ENCODE measurements at regions of chr5 and their contacts with region 1.

Region 1: DNA sequence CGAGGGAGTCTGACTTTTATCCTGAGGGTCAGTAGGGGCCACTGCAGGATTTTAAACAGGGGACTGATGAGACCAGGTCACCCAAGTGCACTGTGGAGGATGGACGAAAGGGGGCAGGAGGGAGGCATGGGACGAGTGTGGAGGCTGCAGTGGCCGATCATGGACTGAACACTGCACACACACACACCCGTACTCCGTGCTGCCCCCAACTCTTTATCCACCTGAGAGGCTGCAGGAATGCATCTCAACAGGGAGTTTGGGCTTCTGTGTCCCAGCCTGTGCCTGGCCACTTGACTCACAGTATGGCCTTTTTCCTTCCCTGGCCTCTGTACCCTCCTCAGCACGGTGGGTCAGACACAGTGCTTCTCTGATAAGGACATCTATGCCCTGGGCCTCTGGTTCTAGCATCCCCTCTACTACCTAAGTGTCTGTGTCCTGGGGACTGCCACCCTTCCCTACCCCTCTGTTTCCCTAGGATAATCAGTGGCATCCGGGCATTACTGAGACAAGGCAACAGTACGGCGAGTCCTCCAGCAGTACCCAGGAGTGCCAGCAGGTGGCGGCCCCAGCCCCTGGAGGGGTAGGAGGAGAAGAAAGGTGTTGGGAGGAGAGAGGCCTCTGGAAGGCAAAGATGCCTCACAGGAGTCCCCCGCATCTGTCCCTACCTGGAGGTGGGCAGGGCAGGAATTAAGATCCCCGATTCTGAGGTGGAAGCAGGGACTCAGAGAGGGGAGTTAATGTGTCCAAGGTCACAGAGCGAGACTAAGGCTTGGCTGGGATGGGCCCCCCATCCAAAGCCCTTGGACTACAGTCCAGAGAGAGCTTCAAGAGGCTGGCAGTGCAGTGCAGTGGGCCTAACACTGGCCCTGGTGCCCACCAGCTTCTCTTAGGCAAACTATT is 5.1 kb upstream of the CDX1 start:
- DNase-seq: peak; percentile 73 to 86 (median 80)
- ATAC-seq: peak; percentile 81
- H3K4me3 ChIP-seq: no peak overlapping the region
- H3K27ac ChIP-seq: no peak overlapping the region
- H3K4me1 ChIP-seq: no peaks in the 10 kb centered on the region
- H3K27me3 ChIP-seq: peaks cover 0 to 2% of the 10 kb centered on the region in 2 donors
- CTCF ChIP-seq: peak; percentile 87 to 92 (median 91)
- POLR2A ChIP-seq: no peak

Region 2: GRCh38 chr5:149775785-149776184 is 385.7 kb before region 1 on chr5:
- intact Hi-C with region 1: no loop called
- DNase-seq: no peak
- ATAC-seq: no peak
- H3K4me3 ChIP-seq: no peak overlapping the region
- H3K27ac ChIP-seq: no peak overlapping the region
- H3K4me1 ChIP-seq: peaks cover 14% of the 10 kb centered on the region
- H3K27me3 ChIP-seq: no peaks in the 10 kb centered on the region
- CTCF ChIP-seq: peak in 1 of 7 experiments; percentile 9
- POLR2A ChIP-seq: no peak

Region 3: DNA sequence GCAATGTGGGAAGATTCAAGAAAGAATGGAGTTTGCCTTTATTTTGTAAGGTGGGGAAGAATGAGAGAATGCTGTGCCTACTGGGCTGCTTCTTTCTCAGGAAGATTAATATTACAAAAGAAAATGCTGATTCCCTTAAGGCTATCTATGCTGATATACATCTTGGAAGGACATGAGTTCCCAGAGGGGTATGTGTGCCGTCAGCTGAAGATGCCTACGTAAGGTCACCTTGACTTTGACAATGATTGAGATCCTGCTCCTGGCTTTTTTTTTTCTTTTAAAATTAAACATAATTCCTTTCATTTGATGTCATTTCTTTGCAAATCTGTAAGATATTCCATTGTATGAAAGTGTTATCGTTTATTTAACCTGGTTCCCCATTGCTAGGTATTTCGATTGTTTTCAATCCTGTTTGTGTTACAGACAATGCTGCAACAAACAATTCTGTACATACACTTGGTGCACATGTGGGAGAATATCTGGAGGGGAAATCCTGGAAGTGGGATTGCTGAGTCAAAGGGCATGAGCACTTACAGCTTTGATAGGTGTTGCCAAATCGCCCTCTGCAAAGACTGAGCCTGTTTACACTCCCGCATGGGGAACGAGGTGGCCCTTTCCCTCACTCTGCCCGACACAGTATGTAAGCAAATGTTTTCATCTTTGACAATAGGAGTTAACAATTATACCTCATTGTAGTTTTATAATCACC is 283.3 kb before region 1 on chr5:
- intact Hi-C with region 1: no loop called
- DNase-seq: no peak
- ATAC-seq: no peak
- H3K4me3 ChIP-seq: no peak overlapping the region
- H3K27ac ChIP-seq: no peak overlapping the region
- H3K4me1 ChIP-seq: no peaks in the 10 kb centered on the region
- H3K27me3 ChIP-seq: no peaks in the 10 kb centered on the region
- CTCF ChIP-seq: no peak
- POLR2A ChIP-seq: no peak

Region 4: GRCh38 chr5:150258130-150258529 is 96.6 kb after region 1 on chr5:
- intact Hi-C with region 1: no loop called
- DNase-seq: no peak
- ATAC-seq: no peak
- H3K4me3 ChIP-seq: no peak overlapping the region
- H3K27ac ChIP-seq: no peak overlapping the region
- H3K4me1 ChIP-seq: no peaks in the 10 kb centered on the region
- H3K27me3 ChIP-seq: no peaks in the 10 kb centered on the region
- CTCF ChIP-seq: no peak
- POLR2A ChIP-seq: no peak

Region 5: GRCh38 chr5:150340614-150341255 is 179.2 kb after region 1 on chr5:
- intact Hi-C with region 1: loop called (anchors 10 kb)
- DNase-seq: no peak
- ATAC-seq: no peak
- H3K4me3 ChIP-seq: no peak overlapping the region
- H3K27ac ChIP-seq: no peak overlapping the region
- H3K4me1 ChIP-seq: no peaks in the 10 kb centered on the region
- H3K27me3 ChIP-seq: no peaks in the 10 kb centered on the region
- CTCF ChIP-seq: no peak
- POLR2A ChIP-seq: no peak

Region 6: GRCh38 chr5:150458819-150459557 is 297.5 kb after region 1 on chr5:
- intact Hi-C with region 1: no loop called
- DNase-seq: peak; percentile 74 to 84 (median 80)
- ATAC-seq: peak; percentile 94
- H3K4me3 ChIP-seq: no peak overlapping the region
- H3K27ac ChIP-seq: no peak overlapping the region
- H3K4me1 ChIP-seq: peaks cover 3% of the 10 kb centered on the region
- H3K27me3 ChIP-seq: no peaks in the 10 kb centered on the region
- CTCF ChIP-seq: peak; percentile 82 to 92 (median 89)
- POLR2A ChIP-seq: no peak

Measured in body of pancreas (tissue), 4 donors.